AG04449 (cell line): ENCODE measurements at regions of chr11 and their contacts with region 1.

Region 1: DNA sequence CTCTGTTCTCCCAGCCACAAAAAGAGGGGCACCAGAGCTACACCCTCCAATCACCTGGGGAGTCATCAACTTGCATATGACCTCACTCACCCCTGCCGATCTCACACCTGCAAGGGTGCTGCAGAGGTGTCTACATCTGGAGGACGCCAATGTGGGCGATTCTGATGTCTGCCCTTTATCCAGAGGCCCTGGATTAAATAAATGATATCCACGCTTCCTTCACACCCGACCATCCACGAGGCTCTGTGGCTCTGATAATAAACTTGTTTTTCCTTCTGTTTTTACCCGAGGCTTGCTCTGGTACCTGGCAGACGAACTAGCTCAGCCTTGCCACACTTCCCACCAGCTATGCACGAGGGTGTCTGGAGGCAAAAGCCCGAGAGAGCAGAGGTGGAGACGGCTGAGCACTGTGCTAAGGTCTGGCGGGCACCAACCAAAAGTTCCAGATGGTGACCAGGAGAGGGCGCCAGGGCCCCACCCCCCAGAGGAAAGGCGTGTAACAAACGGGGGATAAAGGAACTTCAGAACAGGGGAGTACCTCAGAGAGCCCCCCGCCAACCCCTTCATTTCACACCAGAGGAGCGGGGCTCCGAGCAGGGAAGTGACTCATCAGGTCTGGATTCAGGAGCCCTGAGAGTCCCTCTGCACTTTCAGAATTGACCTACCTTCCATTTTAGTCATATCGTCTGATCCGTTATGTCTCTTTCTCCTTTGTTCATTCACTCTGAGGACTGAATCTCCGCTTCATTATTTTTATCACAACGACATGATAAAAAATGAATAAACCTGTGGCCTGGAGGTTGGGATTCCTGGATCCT is 13.5 kb downstream of the SCN3B start:
- DNase-seq: no peak
- H3K4me3 ChIP-seq: no peak overlapping the region
- CTCF ChIP-seq: peak; percentile 84

Region 2: GRCh38 chr11:123261345-123262106 is 379.4 kb before region 1 on chr11:
- CTCF ChIA-PET with region 1: no interaction called
- POLR2A ChIA-PET with region 1: no interaction called
- DNase-seq: no peak
- H3K4me3 ChIP-seq: 0 out of 2 replicates have a peak overlapping the region, but pooled peaks have one; percentile 8
- CTCF ChIP-seq: peak; percentile 94

Region 3: GRCh38 chr11:123628936-123629683 is 11.8 kb before region 1 on chr11:
- CTCF ChIA-PET with region 1: interaction called, 17 read pairs
- POLR2A ChIA-PET with region 1: no interaction called
- DNase-seq: no peak
- H3K4me3 ChIP-seq: no peak overlapping the region
- CTCF ChIP-seq: no peak

Region 4: GRCh38 chr11:123654566-123655081 is 13.7 kb after region 1 on chr11 and contains the start of gene SCN3B:
- CTCF ChIA-PET with region 1: interaction called, 13 read pairs
- POLR2A ChIA-PET with region 1: no interaction called
- DNase-seq: no peak
- H3K4me3 ChIP-seq: peak within 1 kb of the TSS; percentile 62
- CTCF ChIP-seq: no peak

Region 5: DNA sequence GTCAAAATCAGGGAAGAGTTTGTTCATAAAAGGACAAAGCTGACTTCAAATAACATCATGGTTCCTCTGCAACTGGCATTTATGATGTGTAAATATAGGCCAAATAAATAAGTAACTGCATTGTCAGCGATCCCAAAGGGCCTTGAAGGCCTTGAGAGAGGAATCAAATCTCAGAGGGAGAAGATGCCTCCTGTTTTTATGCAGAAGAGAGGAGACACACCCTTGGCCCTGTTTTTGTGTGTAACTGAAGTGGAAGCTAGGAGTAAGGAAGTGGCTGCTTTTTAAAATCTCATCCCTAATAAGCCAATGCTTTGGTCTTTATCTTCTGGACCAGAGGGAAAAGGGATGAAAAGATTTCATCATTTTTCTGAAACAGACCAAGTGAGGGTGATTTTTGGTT is 29.2 kb after region 1 on chr11:
- CTCF ChIA-PET with region 1: no interaction called
- POLR2A ChIA-PET with region 1: no interaction called
- DNase-seq: no peak
- H3K4me3 ChIP-seq: no peak overlapping the region
- CTCF ChIP-seq: no peak